Naive thymus-derived CD4-positive, alpha-beta T cell (primary cell): ENCODE measurements at regions of chr7 and their contacts with region 1.

Region 1: GRCh38 chr7:50418086-50418515 is 32.0 kb downstream of the FIGNL1 start:
- DNase-seq: peak; percentile 31 to 68 (median 56)
- ATAC-seq: peak; percentile 91
- H3K4me3 ChIP-seq: no peak overlapping the region
- H3K4me3 Mint-ChIP-seq: no peak overlapping the region
- H3K27ac ChIP-seq: no peak overlapping the region
- H3K27ac Mint-ChIP-seq: peak overlapping the region in 1 of 9 donors; percentile 26
- H3K4me1 ChIP-seq: peaks cover 0 to 22% of the 10 kb centered on the region in 2 donors
- H3K4me1 Mint-ChIP-seq: peaks cover 5 to 35% (median 29%) of the 10 kb centered on the region in 7 donors
- H3K27me3 ChIP-seq: no peaks in the 10 kb centered on the region
- H3K27me3 Mint-ChIP-seq: no peaks in the 10 kb centered on the region

Region 2: DNA sequence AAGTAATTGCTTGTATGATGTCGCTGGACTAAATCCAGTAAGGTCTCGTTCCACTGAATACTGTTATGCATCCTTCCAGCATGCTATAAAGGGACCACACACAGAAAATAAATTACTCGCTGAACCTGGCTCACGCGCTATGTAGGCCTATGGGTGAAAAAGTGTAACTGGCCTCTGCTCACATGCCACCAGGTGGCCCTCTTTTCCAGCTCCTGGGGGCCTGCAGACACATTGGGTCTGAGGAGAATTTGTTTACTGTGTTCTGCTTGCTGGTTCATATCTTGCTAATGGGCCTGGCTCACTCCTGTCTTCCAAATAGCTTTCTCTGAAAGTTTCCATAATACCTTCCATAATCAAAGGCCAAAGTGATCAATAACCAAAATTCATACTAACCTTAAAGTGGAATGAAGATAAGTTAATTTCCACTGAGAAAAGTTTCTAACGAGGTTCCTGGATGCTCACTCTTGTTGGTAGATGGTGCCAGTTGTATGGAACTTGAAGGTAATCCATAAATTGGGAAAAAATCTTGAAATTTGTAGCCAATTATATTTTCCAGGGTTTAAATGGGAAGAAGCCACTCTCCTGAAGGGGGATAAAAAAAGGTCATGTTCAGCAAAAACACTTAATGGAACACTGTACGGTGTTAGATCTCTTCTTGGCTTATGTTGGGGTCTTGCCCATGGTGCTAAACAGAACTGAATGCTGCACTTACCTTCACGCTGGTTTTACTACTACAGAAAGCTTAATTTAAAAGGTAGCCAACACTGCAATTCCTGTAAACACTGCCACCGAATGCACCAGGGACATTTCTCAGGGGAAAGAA is 298.1 kb before region 1 on chr7:
- CTCF ChIA-PET with region 1: interaction called, 6 read pairs
- POLR2A ChIA-PET with region 1: no interaction called
- intact Hi-C with region 1: loop called (anchors 1 kb)
- DNase-seq: peak in 7 of 9 donors; percentile 10 to 44 (median 23)
- ATAC-seq: peak; percentile 54
- H3K4me3 ChIP-seq: no peak overlapping the region
- H3K4me3 Mint-ChIP-seq: no peak overlapping the region
- H3K27ac ChIP-seq: no peak overlapping the region
- H3K27ac Mint-ChIP-seq: no peak overlapping the region
- H3K4me1 ChIP-seq: no peaks in the 10 kb centered on the region
- H3K4me1 Mint-ChIP-seq: no peaks in the 10 kb centered on the region
- H3K27me3 ChIP-seq: no peaks in the 10 kb centered on the region
- H3K27me3 Mint-ChIP-seq: peaks cover 0 to 49% (median 0%) of the 10 kb centered on the region in 5 donors

Region 3: DNA sequence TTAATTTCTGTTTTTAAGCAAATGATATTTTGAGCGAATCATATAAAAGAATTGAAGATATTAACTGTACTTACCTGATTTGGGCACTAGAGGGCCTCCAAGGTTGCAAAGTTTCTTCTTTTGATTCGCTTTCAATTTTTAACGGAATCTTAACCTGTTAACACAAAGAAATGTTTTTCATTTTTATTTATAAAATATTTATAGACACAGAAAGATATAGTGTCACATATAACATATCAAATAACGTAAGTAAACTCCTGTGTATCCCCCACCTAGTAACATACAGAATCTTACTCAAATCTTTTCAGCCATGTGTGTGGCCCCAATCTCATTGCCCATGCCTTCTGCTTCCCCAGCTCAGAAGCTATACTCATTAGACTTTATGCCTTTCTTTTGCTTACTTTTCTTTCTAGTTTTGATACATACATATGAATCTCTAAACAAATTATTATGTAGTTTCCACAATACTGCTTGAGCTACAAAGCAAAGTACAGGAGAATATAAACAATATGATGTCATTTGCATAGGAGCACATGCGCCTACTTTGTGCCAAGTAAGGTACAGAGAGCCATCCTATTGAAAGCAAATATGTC is 275.6 kb before region 1 on chr7:
- CTCF ChIA-PET with region 1: interaction called, 77 read pairs
- POLR2A ChIA-PET with region 1: interaction called, 4 read pairs
- intact Hi-C with region 1: loop called (anchors 1 kb)
- DNase-seq: peak in 7 of 9 donors; percentile 43 to 72 (median 62)
- ATAC-seq: peak; percentile 83
- H3K4me3 ChIP-seq: no peak overlapping the region
- H3K4me3 Mint-ChIP-seq: peak overlapping the region in 9 of 10 donors; percentile 13 to 86 (median 64)
- H3K27ac ChIP-seq: peak overlapping the region; percentile 55
- H3K27ac Mint-ChIP-seq: peak overlapping the region in 8 of 9 donors; percentile 16 to 91 (median 62)
- H3K4me1 ChIP-seq: peaks cover 3% of the 10 kb centered on the region in 2 donors
- H3K4me1 Mint-ChIP-seq: peaks cover 0 to 37% (median 12%) of the 10 kb centered on the region in 7 donors
- H3K27me3 ChIP-seq: no peaks in the 10 kb centered on the region
- H3K27me3 Mint-ChIP-seq: peaks cover 0 to 18% (median 0%) of the 10 kb centered on the region in 5 donors

Region 4: DNA sequence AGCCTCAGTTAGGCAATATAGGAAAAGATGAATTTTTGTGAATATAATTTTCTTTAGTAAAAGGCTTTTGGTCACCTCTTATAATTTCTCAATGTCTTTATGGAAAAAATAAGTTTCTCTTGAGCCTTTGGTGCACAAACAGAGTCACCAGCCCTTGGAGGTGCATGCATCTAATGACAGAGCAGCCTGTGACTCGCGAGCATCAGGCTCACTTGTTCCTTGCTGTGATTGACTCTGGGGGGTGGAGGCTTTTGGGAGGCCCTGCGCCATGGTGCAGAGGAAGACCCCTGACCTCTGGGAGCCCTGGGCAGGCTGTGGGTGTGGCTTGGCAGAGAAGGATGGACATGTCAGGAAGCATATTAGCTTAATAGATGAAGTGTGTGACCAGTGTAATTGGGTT is 28.1 kb before region 1 on chr7:
- CTCF ChIA-PET with region 1: interaction called, 11 read pairs
- POLR2A ChIA-PET with region 1: interaction called, 4 read pairs
- intact Hi-C with region 1: loop called in 1 of 2 experiments (anchors 1 kb)
- DNase-seq: no peak
- ATAC-seq: no peak
- H3K4me3 ChIP-seq: no peak overlapping the region
- H3K4me3 Mint-ChIP-seq: peak overlapping the region in 6 of 10 donors; percentile 5 to 76 (median 44)
- H3K27ac ChIP-seq: peak overlapping the region; percentile 60
- H3K27ac Mint-ChIP-seq: peak overlapping the region; percentile 80 to 98 (median 95)
- H3K4me1 ChIP-seq: peaks cover 51 to 78% of the 10 kb centered on the region in 2 donors
- H3K4me1 Mint-ChIP-seq: peaks cover 53 to 96% (median 91%) of the 10 kb centered on the region in 7 donors
- H3K27me3 ChIP-seq: no peaks in the 10 kb centered on the region
- H3K27me3 Mint-ChIP-seq: no peaks in the 10 kb centered on the region

Region 5: DNA sequence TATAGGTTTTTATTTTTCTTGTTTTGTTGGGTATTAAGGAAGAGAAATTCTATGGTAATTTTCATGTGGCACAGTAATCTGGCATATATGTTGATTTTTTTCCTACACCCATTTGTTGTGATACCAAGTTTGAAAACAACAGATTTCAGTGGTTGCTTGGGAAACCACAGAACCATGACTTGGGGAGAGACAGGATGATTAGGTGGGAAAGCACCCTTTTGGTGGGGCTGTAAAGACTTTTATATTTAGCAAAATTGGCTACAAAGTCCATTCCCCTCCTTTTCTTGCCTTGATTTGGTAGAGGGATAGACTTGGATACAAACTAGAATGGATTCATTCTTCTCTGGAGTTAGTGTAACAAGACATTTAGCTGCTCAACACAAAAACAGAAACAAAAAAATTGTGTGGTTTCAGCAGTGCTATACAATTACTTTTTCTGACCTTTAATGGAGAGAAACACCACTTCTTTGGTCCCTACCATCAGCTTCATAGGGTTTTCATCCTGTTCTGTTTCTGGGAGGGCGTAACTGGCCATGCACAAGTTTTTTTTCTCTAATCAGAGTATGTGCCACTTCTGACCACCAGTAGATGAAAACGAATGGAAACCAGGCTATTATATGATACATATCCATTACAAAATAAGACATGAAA is 20.7 kb before region 1 on chr7:
- CTCF ChIA-PET with region 1: interaction called, 6 read pairs
- POLR2A ChIA-PET with region 1: no interaction called
- intact Hi-C with region 1: loop called in 1 of 2 experiments (anchors 1 kb)
- DNase-seq: peak in 1 of 9 donors; percentile 48
- ATAC-seq: peak; percentile 62
- H3K4me3 ChIP-seq: no peak overlapping the region
- H3K4me3 Mint-ChIP-seq: peak overlapping the region in 6 of 10 donors; percentile 26 to 75 (median 58)
- H3K27ac ChIP-seq: peak overlapping the region; percentile 59
- H3K27ac Mint-ChIP-seq: peak overlapping the region; percentile 80 to 98 (median 93)
- H3K4me1 ChIP-seq: peaks cover 31 to 60% of the 10 kb centered on the region in 2 donors
- H3K4me1 Mint-ChIP-seq: peaks cover 45 to 84% (median 73%) of the 10 kb centered on the region in 7 donors
- H3K27me3 ChIP-seq: no peaks in the 10 kb centered on the region
- H3K27me3 Mint-ChIP-seq: no peaks in the 10 kb centered on the region

Region 6: GRCh38 chr7:50449881-50450589 is 31.9 kb after region 1 on chr7 and contains the start of gene FIGNL1:
- CTCF ChIA-PET with region 1: no interaction called
- POLR2A ChIA-PET with region 1: no interaction called
- intact Hi-C with region 1: loop called in 1 of 2 experiments (anchors 2 kb)
- DNase-seq: peak; percentile 61 to 87 (median 84)
- ATAC-seq: peak; percentile 98
- H3K4me3 ChIP-seq: peak within 1 kb of the TSS; percentile 63
- H3K4me3 Mint-ChIP-seq: peak within 1 kb of the TSS; percentile 91 to 96 (median 94)
- H3K27ac ChIP-seq: peak within 1 kb of the TSS; percentile 94
- H3K27ac Mint-ChIP-seq: peak within 1 kb of the TSS; percentile 92 to 99 (median 96)
- H3K4me1 ChIP-seq: peaks cover 13 to 14% of the 10 kb centered on the region in 2 donors
- H3K4me1 Mint-ChIP-seq: peaks cover 14 to 43% (median 29%) of the 10 kb centered on the region in 7 donors
- H3K27me3 ChIP-seq: no peaks in the 10 kb centered on the region
- H3K27me3 Mint-ChIP-seq: peaks cover 0 to 11% (median 0%) of the 10 kb centered on the region in 5 donors
- total RNA-seq, gene FIGNL1: 7.7 to 30.2 (median 14.3) TPM

Region 7: GRCh38 chr7:50679218-50680007 is 261.3 kb after region 1 on chr7:
- CTCF ChIA-PET with region 1: no interaction called
- POLR2A ChIA-PET with region 1: no interaction called
- intact Hi-C with region 1: loop called in 1 of 2 experiments (anchors 1 kb)
- DNase-seq: peak in 6 of 9 donors; percentile 27 to 59 (median 54)
- ATAC-seq: peak; percentile 73
- H3K4me3 ChIP-seq: no peak overlapping the region
- H3K4me3 Mint-ChIP-seq: no peak overlapping the region
- H3K27ac ChIP-seq: no peak overlapping the region
- H3K27ac Mint-ChIP-seq: no peak overlapping the region
- H3K4me1 ChIP-seq: no peaks in the 10 kb centered on the region
- H3K4me1 Mint-ChIP-seq: peaks cover 0 to 5% (median 0%) of the 10 kb centered on the region in 7 donors
- H3K27me3 ChIP-seq: no peaks in the 10 kb centered on the region
- H3K27me3 Mint-ChIP-seq: peaks cover 0 to 22% (median 0%) of the 10 kb centered on the region in 5 donors